Sciatic nerve (tissue), 2 donors: ENCODE measurements at regions of chr1 and their contacts with region 1.

Region 1: DNA sequence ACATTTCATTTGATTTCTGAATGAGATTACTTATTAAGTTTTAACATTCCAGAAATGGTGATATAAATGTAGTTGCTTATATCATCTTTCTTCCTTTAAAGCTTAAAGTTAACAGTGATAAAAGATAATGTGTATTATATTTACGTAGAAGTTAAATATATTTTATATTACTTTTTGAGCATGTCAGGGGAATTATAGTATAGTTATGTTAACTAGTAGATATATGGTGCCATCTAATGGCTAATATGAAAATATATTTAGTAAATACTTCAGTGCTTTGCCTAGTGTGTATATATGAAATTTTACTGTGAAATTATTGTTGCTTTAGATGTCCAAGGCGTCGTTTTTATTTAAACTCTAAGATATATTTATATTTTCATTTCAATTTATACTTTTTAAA is 51.5 kb downstream of the SYT14 start:
- DNase-seq: no peak
- ATAC-seq: no peak

Region 2: DNA sequence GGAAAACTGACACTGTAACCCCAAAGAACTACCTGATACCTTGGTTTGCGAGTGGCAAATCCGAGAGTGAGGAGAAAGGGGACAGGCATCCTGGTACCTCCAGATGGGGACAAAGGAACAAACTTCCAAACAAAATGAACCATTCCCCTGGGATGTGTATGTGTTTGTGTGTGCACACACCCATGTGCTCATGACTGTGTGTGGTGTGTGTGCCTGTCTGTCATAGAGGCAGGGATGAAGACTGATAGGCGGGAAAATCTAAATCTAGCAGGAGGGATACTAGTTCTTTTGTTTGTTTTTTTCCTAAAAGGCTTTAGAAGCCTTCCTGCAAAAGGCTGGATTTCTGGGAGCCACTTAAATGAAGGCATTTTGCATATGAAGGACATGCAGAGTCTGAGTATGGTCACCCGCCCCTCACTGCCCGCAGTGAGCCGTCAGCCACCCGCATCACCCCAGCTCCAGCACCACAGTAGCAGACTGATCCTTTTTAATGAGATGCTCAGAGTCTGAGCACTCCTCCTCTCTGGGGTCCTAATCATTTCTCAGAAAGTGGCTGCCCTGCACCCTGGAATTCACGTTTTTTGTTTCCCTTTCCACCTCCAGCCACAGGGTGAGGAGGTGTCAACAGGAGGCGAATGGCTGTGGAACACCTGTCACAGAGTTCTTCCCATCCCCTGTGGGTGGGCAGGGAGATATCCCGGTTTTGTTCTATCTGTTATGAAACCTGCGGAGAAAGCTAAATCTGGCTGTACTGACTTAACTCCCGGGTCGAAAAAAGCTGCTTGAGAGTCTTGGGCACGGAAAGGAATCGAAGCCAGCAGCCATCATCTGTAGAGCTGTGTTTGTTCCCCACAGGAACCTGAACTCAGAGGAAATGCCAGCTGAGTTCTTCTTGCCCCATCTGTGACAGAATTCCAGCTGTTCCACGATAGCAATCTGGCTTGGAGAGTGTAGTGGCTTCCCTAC is 126.9 kb before region 1 on chr1:
- intact Hi-C with region 1: loop called (anchors 2 kb)
- DNase-seq: no peak
- ATAC-seq: no peak